Activated CD4-positive, alpha-beta T cell treated with anti-CD3 and anti-CD28 coated beads for 36 hours (primary cell): ENCODE measurements at regions of chr9 and their contacts with region 1.

Region 1: DNA sequence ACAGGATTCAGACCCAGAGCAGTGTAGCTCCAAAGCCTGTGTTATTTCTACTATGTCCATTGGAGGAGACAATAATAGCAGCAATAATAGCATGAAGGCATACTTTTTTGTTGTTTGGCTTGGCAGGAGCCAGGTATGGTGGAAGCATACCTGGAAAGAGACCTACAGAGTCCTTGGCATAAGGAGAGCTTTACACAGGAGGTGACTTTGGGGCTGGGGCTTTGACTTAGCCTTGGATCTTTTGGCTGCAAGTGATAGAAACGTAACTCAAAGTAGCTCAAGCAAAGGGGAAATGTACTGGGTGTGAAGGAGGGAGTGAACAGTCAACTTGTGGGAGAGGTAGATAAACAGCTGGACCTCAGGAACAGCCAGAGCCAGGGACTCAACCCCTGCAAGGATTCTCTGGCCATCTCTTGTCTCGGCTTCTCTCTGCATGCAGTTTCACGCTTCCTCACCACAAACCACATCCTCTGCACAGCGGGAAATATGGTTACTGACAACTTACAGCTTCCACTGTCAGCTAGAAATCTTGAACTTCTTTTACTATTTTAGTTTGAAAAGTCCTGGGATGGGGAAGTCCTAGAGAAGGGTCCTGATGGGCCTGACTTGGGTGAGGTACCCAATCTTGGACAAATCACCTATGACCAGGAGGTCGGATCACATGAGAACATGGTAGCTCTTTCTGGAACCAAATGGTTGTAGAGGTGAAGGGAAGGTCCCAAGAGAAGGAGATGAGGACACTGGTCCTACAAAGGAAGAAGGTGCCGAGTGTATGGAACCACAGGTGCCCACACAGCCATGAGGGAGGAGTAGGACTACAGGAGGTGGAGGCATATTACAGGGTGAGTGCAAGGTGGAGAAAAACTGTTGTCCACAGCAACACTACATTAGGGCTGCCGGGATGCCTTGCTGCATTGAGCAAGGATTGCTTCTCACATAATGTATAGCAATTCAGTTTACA is 47.0 kb upstream of the TGFBR1 start:
- DNase-seq: peak; percentile 89
- ATAC-seq: peak; percentile 59
- H3K4me3 Mint-ChIP-seq: peak overlapping the region; percentile 35
- H3K27ac Mint-ChIP-seq: peak overlapping the region; percentile 79
- H3K4me1 Mint-ChIP-seq: peaks cover 66% of the 10 kb centered on the region
- H3K27me3 Mint-ChIP-seq: peaks cover 2% of the 10 kb centered on the region

Region 2: GRCh38 chr9:99076483-99077171 is 18.7 kb after region 1 on chr9:
- CTCF ChIA-PET with region 1: no interaction called
- POLR2A ChIA-PET with region 1: no interaction called
- intact Hi-C with region 1: loop called in 1 of 2 experiments (anchors 2 kb)
- DNase-seq: peak; percentile 39
- ATAC-seq: peak; percentile 52
- H3K4me3 Mint-ChIP-seq: no peak overlapping the region
- H3K27ac Mint-ChIP-seq: peak overlapping the region; percentile 73
- H3K4me1 Mint-ChIP-seq: peaks cover 20% of the 10 kb centered on the region
- H3K27me3 Mint-ChIP-seq: no peaks in the 10 kb centered on the region

Region 3: GRCh38 chr9:99118782-99119466 is 61.0 kb after region 1 on chr9:
- CTCF ChIA-PET with region 1: interaction called, 3 read pairs
- POLR2A ChIA-PET with region 1: no interaction called
- intact Hi-C with region 1: loop called in 1 of 2 experiments (anchors 1 kb)
- DNase-seq: peak; percentile 71
- ATAC-seq: peak; percentile 97
- H3K4me3 Mint-ChIP-seq: peak overlapping the region; percentile 48
- H3K27ac Mint-ChIP-seq: peak overlapping the region; percentile 90
- H3K4me1 Mint-ChIP-seq: peaks cover 79% of the 10 kb centered on the region
- H3K27me3 Mint-ChIP-seq: no peaks in the 10 kb centered on the region

Region 4: GRCh38 chr9:99266255-99267023 is 208.5 kb after region 1 on chr9:
- CTCF ChIA-PET with region 1: no interaction called
- POLR2A ChIA-PET with region 1: no interaction called
- intact Hi-C with region 1: no loop called
- DNase-seq: peak; percentile 83
- ATAC-seq: peak; percentile 85
- H3K4me3 Mint-ChIP-seq: peak overlapping the region; percentile 48
- H3K27ac Mint-ChIP-seq: peak overlapping the region; percentile 65
- H3K4me1 Mint-ChIP-seq: peaks cover 23% of the 10 kb centered on the region
- H3K27me3 Mint-ChIP-seq: peaks cover 5% of the 10 kb centered on the region

Region 5: GRCh38 chr9:99433555-99433954 is 375.6 kb after region 1 on chr9:
- CTCF ChIA-PET with region 1: no interaction called
- POLR2A ChIA-PET with region 1: no interaction called
- intact Hi-C with region 1: loop called in 1 of 2 experiments (anchors 5 kb)
- DNase-seq: peak; percentile 79
- ATAC-seq: peak; percentile 100
- H3K4me3 Mint-ChIP-seq: no peak overlapping the region
- H3K27ac Mint-ChIP-seq: peak overlapping the region; percentile 80
- H3K4me1 Mint-ChIP-seq: peaks cover 13% of the 10 kb centered on the region
- H3K27me3 Mint-ChIP-seq: no peaks in the 10 kb centered on the region

Region 6: GRCh38 chr9:100598641-100599145 is 1540.7 kb after region 1 on chr9:
- CTCF ChIA-PET with region 1: no interaction called
- POLR2A ChIA-PET with region 1: no interaction called
- intact Hi-C with region 1: no loop called
- DNase-seq: peak; percentile 87
- ATAC-seq: peak; percentile 87
- H3K4me3 Mint-ChIP-seq: peak overlapping the region; percentile 59
- H3K27ac Mint-ChIP-seq: peak overlapping the region; percentile 45
- H3K4me1 Mint-ChIP-seq: peaks cover 20% of the 10 kb centered on the region
- H3K27me3 Mint-ChIP-seq: no peaks in the 10 kb centered on the region